Activated naive CD4-positive, alpha-beta T cell treated with anti-CD3 and anti-CD28 coated beads, Interleukin-2, amount 10 ng/mL, durations not matched to agents 7 days and 5 days (primary cell): ENCODE measurements at regions of chr6 and their contacts with region 1.

Region 1: GRCh38 chr6:3251462-3252314 is 7.1 kb upstream of the PSMG4 start:
- DNase-seq: peak; percentile 88
- H3K4me3 Mint-ChIP-seq: no peak overlapping the region
- H3K27ac Mint-ChIP-seq: peak overlapping the region; percentile 5
- H3K4me1 Mint-ChIP-seq: peaks cover 20% of the 10 kb centered on the region
- H3K27me3 Mint-ChIP-seq: peaks cover 70% of the 10 kb centered on the region

Region 2: DNA sequence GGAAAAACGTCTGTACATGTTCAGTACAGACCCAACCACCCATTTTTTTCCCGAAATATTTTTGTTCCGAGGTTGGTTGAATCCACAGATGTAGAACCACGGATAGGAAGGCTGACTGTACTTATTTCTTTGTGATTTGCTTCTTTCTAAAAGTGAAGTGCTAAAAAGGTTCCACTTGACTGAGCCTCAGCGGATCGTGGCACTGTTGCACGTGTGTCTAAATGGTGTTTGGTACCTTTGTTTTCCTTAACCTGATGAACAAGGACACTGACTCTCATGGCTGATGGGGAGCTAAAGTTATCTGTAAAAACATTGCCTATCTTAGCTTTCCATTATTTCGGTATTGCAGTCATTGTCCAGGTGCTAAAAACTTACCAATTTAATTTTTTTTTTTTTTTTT is 127.0 kb before region 1 on chr6:
- CTCF ChIA-PET with region 1: interaction called, 24 read pairs
- DNase-seq: no peak
- H3K4me3 Mint-ChIP-seq: no peak overlapping the region
- H3K27ac Mint-ChIP-seq: no peak overlapping the region
- H3K4me1 Mint-ChIP-seq: peaks cover 8% of the 10 kb centered on the region
- H3K27me3 Mint-ChIP-seq: peaks cover 4% of the 10 kb centered on the region

Region 3: GRCh38 chr6:3186974-3187382 is 64.7 kb before region 1 on chr6:
- CTCF ChIA-PET with region 1: no interaction called
- DNase-seq: no peak
- H3K4me3 Mint-ChIP-seq: no peak overlapping the region
- H3K27ac Mint-ChIP-seq: no peak overlapping the region
- H3K4me1 Mint-ChIP-seq: no peaks in the 10 kb centered on the region
- H3K27me3 Mint-ChIP-seq: peaks cover 51% of the 10 kb centered on the region

Region 4: DNA sequence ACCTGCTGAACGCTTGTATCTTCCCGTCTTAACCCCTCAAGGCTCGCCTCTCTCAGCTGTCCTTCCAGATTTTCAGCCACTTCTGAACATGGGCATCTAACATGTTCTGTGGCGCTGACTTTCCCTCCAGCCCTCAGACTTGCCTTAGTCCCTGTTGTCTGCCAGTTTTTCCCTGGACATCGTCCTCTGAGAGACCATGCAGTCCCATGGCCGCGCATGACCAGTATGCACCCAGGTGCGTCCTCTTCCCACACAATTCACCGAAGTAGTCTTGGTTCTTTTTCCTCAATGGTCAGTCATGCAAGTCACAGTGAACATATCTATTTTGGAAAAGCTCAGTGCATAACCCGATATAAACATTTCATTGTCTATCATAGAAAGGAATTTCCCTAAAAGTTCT is 33.4 kb before region 1 on chr6:
- CTCF ChIA-PET with region 1: no interaction called
- DNase-seq: no peak
- H3K4me3 Mint-ChIP-seq: no peak overlapping the region
- H3K27ac Mint-ChIP-seq: no peak overlapping the region
- H3K4me1 Mint-ChIP-seq: no peaks in the 10 kb centered on the region
- H3K27me3 Mint-ChIP-seq: peaks cover 46% of the 10 kb centered on the region